Activated CD4-positive, alpha-beta memory T cell treated with anti-CD3 and anti-CD28 coated beads, Interleukin-2, amount 10 ng/mL, durations not matched to agents 7 days and 5 days (primary cell): ENCODE measurements at regions of chr21 and their contacts with region 1.

Region 1: GRCh38 chr21:44873356-44874239 is at the start of gene PTTG1IP:
- DNase-seq: peak; percentile 100
- H3K4me3 Mint-ChIP-seq: peak within 1 kb of the TSS; percentile 93
- H3K27ac Mint-ChIP-seq: peak within 1 kb of the TSS; percentile 92
- H3K4me1 Mint-ChIP-seq: peaks cover 59% of the 10 kb centered on the region
- H3K27me3 Mint-ChIP-seq: no peaks in the 10 kb centered on the region
- total RNA-seq, gene PTTG1IP: 80.3 to 82.6 TPM

Region 2: GRCh38 chr21:44596068-44596725 is 277.4 kb before region 1 on chr21:
- CTCF ChIA-PET with region 1: no interaction called
- POLR2A ChIA-PET with region 1: no interaction called
- DNase-seq: no peak
- H3K4me3 Mint-ChIP-seq: no peak overlapping the region
- H3K27ac Mint-ChIP-seq: no peak overlapping the region
- H3K4me1 Mint-ChIP-seq: no peaks in the 10 kb centered on the region
- H3K27me3 Mint-ChIP-seq: peaks cover 13% of the 10 kb centered on the region

Region 3: DNA sequence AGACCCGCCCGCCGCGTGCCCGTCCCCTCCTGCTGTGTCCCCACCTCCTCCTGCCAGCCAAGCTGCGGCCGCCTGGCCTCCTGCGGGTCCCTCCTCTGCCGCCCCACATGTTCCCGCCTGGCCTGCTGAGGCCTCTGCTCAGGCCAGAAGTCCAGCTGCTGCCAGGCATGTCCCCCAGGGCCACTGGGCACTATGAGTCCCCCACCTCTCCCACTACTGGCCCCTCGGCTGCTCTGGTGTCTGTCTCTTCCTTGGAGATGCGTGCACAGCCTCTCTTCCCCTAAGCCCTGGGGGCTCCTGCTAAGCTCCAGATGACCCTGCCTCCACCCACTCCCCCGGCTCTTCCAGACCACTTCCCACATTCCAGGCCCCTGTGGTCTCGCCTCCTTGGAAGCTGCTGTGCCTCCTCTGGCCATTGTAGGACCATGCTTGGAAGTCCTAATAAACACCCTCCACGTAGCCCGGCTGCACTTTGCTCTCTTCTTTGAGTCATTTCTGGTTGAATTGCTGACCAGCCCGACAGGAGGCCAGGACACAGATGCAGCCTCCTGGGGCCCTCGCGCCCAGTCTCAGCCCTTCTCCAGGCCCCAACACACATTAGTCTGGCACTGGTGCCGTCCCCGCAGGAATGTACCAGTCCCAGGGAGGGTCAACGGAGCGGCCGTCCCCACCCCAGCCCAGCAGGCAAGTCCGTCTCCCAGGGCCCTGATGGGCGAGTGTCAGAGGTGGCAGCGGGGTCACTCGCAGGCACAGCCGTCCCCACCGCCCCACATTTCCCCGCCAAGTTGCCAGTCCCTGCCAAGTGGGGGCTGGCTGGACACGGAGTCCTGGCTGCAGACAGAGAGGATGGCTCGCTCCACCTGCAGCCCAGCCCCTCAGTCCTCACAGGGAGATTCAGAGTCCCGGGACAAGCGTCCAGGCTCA is 175.5 kb before region 1 on chr21:
- CTCF ChIA-PET with region 1: no interaction called
- POLR2A ChIA-PET with region 1: no interaction called
- DNase-seq: no peak
- H3K4me3 Mint-ChIP-seq: no peak overlapping the region
- H3K27ac Mint-ChIP-seq: no peak overlapping the region
- H3K4me1 Mint-ChIP-seq: peaks cover 2% of the 10 kb centered on the region
- H3K27me3 Mint-ChIP-seq: peaks cover 64% of the 10 kb centered on the region

Region 4: GRCh38 chr21:44801468-44802395 is 71.9 kb before region 1 on chr21 and contains the start of gene UBE2G2:
- CTCF ChIA-PET with region 1: interaction called, 84 read pairs
- POLR2A ChIA-PET with region 1: interaction called, 76 read pairs
- DNase-seq: peak; percentile 87
- H3K4me3 Mint-ChIP-seq: peak within 1 kb of the TSS; percentile 88
- H3K27ac Mint-ChIP-seq: peak within 1 kb of the TSS; percentile 80
- H3K4me1 Mint-ChIP-seq: peaks cover 43% of the 10 kb centered on the region
- H3K27me3 Mint-ChIP-seq: no peaks in the 10 kb centered on the region
- total RNA-seq, gene UBE2G2: 70.7 to 74.0 TPM

Region 5: GRCh38 chr21:44817506-44817880 is 56.1 kb before region 1 on chr21:
- CTCF ChIA-PET with region 1: interaction called, 7 read pairs
- POLR2A ChIA-PET with region 1: interaction called, 17 read pairs
- DNase-seq: peak; percentile 95
- H3K4me3 Mint-ChIP-seq: peak overlapping the region; percentile 68
- H3K27ac Mint-ChIP-seq: no peak overlapping the region
- H3K4me1 Mint-ChIP-seq: peaks cover 23% of the 10 kb centered on the region
- H3K27me3 Mint-ChIP-seq: peaks cover 5% of the 10 kb centered on the region

Region 6: GRCh38 chr21:44892536-44893277 is 19.1 kb after region 1 on chr21:
- CTCF ChIA-PET with region 1: interaction called, 8 read pairs
- POLR2A ChIA-PET with region 1: interaction called, 10 read pairs
- DNase-seq: peak; percentile 81
- H3K4me3 Mint-ChIP-seq: no peak overlapping the region
- H3K27ac Mint-ChIP-seq: peak overlapping the region; percentile 44
- H3K4me1 Mint-ChIP-seq: peaks cover 12% of the 10 kb centered on the region
- H3K27me3 Mint-ChIP-seq: no peaks in the 10 kb centered on the region

Region 7: DNA sequence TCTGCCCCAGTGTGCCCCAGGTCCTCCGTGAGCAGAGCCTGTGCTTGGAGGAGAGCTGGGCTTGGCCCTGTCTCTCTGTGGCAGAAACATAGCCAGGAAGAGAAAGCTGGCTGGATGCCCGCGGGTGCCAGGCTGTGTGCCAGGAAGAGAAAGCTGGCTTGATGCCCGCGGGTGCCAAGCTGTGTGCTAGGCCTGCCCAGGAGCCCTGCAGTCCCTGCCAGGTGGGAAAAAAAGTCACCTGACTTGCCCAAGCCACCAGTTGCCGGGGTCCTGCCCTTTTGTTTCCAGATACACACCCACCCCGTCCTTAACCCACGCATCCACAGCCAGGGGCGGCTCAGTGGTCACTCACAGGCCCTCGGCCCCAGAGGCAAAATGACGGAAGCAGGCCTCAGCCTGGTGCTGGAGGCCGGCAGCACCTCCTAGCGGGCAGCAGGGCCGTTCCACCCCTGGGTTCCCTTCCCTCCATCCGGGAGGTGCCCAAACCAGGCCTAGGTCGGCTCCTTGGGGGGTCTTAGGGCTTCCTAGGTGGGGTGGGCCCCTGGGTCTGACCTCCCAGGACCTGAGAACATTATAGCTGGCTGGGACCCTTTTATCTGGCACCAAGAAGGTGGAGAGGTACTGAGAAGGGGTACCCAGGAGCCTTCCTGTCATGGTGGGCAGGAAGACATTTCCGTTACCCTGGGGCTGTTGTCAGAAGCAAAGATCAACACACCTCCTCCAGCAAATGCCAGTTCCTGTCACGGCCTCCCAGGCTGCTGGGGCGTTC is 38.0 kb after region 1 on chr21:
- CTCF ChIA-PET with region 1: interaction called, 4 read pairs
- POLR2A ChIA-PET with region 1: interaction called, 19 read pairs
- DNase-seq: peak; percentile 79
- H3K4me3 Mint-ChIP-seq: peak overlapping the region; percentile 74
- H3K27ac Mint-ChIP-seq: peak overlapping the region; percentile 89
- H3K4me1 Mint-ChIP-seq: peaks cover 70% of the 10 kb centered on the region
- H3K27me3 Mint-ChIP-seq: no peaks in the 10 kb centered on the region

Region 8: DNA sequence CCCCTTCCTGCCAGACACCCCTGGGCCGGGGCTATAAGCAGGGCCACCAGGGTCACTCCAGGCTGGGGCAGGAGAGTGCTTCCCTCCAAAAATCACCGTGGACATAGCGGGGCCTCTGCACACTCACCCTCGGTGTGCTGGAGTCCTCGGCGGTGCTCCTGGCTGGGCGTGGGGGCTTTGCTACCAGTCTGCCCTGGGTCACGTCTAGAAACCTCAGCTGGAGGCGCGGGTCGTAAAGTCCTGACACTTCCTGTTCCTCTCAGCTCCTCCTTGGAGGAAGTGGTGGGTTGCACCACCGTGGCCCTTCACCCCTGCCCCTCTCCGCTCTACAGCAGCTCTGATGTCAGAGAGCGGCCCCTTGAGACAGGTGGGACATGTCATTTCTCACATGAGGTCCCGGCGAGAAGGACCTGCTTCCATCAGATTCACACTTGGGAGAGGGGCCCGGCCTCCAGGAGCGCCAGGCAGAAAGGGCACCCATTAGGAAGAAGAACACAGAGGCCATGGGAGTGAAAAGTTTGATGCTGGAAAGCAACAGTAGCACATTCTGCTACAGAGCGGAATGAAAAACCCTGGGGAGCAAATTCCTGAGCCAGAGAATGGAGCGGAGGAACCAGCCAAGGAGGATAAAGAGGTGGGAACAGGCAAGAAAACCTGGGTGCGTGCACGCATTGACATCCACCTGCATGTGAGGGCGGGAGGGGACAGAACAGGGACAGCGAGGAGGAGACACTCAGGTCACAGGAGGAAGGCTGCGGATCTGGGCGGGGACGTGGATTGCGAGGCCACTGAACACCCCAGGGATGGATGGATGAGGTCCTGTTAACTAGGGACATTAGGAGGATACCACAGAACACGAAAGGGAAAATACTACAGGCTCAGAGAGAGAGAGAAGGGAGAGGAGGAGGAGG is 47.4 kb after region 1 on chr21 and contains the start of gene ITGB2:
- CTCF ChIA-PET with region 1: interaction called, 4 read pairs
- POLR2A ChIA-PET with region 1: interaction called, 10 read pairs
- DNase-seq: peak; percentile 76
- H3K4me3 Mint-ChIP-seq: peak within 1 kb of the TSS; percentile 100
- H3K27ac Mint-ChIP-seq: peak within 1 kb of the TSS; percentile 88
- H3K4me1 Mint-ChIP-seq: peaks cover 70% of the 10 kb centered on the region
- H3K27me3 Mint-ChIP-seq: no peaks in the 10 kb centered on the region
- total RNA-seq, gene ITGB2: 631 to 642 TPM

Region 9: GRCh38 chr21:44927587-44928461 is 54.2 kb after region 1 on chr21:
- CTCF ChIA-PET with region 1: interaction called, 21 read pairs
- POLR2A ChIA-PET with region 1: interaction called, 24 read pairs
- DNase-seq: peak; percentile 89
- H3K4me3 Mint-ChIP-seq: peak overlapping the region; percentile 94
- H3K27ac Mint-ChIP-seq: peak overlapping the region; percentile 98
- H3K4me1 Mint-ChIP-seq: peaks cover 77% of the 10 kb centered on the region
- H3K27me3 Mint-ChIP-seq: no peaks in the 10 kb centered on the region